K562 (cell line): ENCODE measurements at regions of chr13 and their contacts with region 1.

Region 1: DNA sequence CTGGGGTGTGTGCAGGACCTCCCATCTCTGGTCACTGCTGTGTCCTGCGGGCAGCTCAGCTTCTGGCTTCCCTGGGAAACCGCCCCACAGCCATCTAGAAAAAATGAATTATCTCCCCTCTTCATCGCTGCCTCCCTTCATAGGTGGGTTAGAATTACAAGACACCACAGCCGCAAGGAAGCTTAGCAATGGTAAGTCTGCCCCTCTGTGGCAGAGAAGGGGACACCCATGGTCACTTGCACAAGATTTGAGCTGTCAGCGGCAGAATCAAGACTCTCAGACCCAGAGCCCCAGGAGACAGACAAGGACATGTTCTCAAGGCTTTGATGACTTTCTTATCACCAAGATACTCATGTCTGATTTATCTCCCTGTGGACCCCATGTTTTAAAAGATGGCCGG is 110.8 kb upstream of the PABPC3 start:
- DNase-seq: peak in 2 of 4 experiments; percentile 17 to 49
- ATAC-seq: peak; percentile 91
- H3K4me3 ChIP-seq: no peak overlapping the region
- H3K27ac ChIP-seq: no peak overlapping the region
- H3K4me1 ChIP-seq: peaks cover 0 to 3% of the 10 kb centered on the region in 2 experiments; a peak in 3 of 5 replicates
- H3K27me3 ChIP-seq: peaks cover 4 to 32% of the 10 kb centered on the region in 2 experiments; a peak in 3 of 5 replicates
- CTCF ChIP-seq: peak; percentile 56 to 59 (median 56)
- EP300 ChIP-seq: no peak
- POLR2A ChIP-seq: no peak
- RAD21 ChIP-seq: peak; percentile 27 to 70

Region 2: GRCh38 chr13:24741016-24741662 is 244.0 kb before region 1 on chr13:
- CTCF ChIA-PET with region 1: no interaction called
- POLR2A ChIA-PET with region 1: no interaction called
- in situ Hi-C with region 1: loop called (anchors 25 kb)
- intact Hi-C with region 1: loop called (anchors 1 kb)
- DNase-seq: peak; percentile 48 to 54 (median 50)
- ATAC-seq: peak; percentile 91
- H3K4me3 ChIP-seq: no peak overlapping the region
- H3K27ac ChIP-seq: no peak overlapping the region
- H3K4me1 ChIP-seq: peaks cover 0 to 8% of the 10 kb centered on the region in 2 experiments; a peak in 2 of 5 replicates
- H3K27me3 ChIP-seq: no peaks in the 10 kb centered on the region
- CTCF ChIP-seq: peak; percentile 47 to 61 (median 57)
- EP300 ChIP-seq: no peak
- POLR2A ChIP-seq: no peak
- RAD21 ChIP-seq: peak; percentile 11 to 50; a peak in 3 of 4 replicates